Right ventricle myocardium inferior (tissue), 1 donor: ENCODE measurements at regions of chr7 and their contacts with region 1.

Region 1: DNA sequence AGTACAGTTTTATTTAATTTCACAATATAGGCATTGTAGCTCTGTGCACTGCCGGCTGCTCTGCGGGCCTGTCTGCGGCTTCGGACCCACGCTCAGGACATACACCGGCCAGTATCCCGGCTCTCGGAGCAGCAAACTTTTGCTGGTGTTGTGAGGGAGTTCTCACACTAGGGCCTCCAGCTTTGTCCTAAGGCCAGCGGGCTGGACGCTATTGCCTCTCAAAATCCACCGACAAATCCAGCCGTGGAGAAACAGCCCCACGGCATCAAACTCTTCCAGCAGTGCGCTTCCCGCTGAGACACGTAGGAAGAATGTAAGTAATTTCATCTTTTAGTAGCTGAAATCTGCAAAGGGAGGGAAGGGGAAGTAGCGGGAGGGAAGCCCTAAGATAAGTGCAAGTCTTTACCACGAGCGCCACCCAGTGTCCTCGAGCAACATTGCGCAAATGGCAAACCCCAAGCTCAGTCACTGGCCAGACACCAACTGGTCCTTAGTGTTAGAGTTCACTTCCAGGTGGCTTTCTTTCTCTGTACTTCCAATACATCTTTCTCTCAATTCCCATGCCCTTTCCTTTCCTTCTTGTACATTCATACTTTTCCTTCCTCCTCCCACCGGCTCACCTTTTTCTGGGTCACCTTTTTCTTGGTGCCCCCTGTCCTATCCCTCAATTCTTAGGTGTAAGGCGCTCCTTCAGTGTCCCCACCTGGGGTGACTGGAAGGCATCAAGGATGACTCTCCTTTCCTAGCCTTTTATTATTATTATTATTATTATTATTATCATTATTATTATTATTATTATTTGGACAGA is 3.0 kb upstream of the DLX5 start:
- DNase-seq: peak; percentile 83
- ATAC-seq: peak; percentile 88

Region 2: GRCh38 chr7:95916573-95917297 is 1110.9 kb before region 1 on chr7:
- intact Hi-C with region 1: loop called (anchors 5 kb)
- DNase-seq: peak; percentile 81
- ATAC-seq: peak; percentile 72

Region 3: GRCh38 chr7:96075510-96076349 is 951.9 kb before region 1 on chr7:
- intact Hi-C with region 1: loop called (anchors 1 kb)
- DNase-seq: peak; percentile 73
- ATAC-seq: peak; percentile 92

Region 4: DNA sequence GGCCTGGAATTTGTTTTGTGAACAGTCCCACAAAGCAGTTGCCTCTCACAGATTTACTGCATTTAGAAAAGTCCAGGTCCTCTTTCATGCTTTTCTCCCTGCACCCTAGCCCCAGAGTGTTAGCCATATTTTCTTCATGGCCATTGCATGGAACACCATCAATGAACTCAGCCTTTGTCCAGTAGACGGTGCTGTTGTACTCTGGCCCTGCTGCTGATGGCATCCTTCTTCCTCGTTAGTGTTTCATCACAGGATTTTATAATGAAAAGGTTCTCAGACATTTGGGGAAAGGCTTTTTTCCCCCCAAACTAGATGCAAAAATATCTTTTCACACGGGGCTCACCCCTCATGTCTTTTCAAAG is 612.7 kb before region 1 on chr7:
- intact Hi-C with region 1: loop called (anchors 10 kb)
- DNase-seq: no peak
- ATAC-seq: no peak

Region 5: DNA sequence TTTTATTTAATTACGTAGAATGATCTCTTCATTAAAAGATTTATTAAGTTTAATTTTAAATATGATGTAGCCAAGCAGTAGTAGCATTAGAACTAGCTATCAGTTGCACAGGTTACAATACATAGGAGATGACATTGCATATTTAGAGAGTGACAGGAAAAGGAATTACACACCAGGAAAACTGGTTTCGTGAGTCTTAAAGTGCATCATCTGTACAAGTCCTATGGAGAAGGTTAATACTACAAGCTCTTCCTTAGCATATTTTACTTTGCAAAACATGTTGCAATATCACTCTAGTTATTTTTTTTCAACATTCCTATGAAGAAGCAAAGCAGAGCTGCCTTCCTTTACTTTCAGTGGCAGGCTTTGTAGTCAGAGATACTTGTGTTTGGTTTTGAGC is 297.8 kb before region 1 on chr7:
- intact Hi-C with region 1: no loop called
- DNase-seq: no peak
- ATAC-seq: no peak

Region 6: GRCh38 chr7:97851683-97852082 is 824.1 kb after region 1 on chr7:
- intact Hi-C with region 1: no loop called
- DNase-seq: no peak
- ATAC-seq: peak; percentile 82